Activated CD8-positive, alpha-beta T cell treated with anti-CD3 and anti-CD28 coated beads, Interleukin-2, amount 10 ng/mL, durations not matched to agents 7 days and 5 days (primary cell): ENCODE measurements at regions of chr1 and their contacts with region 1.

Region 1: GRCh38 chr1:168225476-168226190 is at the start of gene SFT2D2:
- DNase-seq: peak; percentile 84
- ATAC-seq: peak; percentile 98
- H3K4me3 Mint-ChIP-seq: peak within 1 kb of the TSS; percentile 86
- H3K27ac Mint-ChIP-seq: peak within 1 kb of the TSS; percentile 82
- H3K4me1 Mint-ChIP-seq: peaks cover 46% of the 10 kb centered on the region
- H3K27me3 Mint-ChIP-seq: peaks cover 3% of the 10 kb centered on the region
- total RNA-seq, gene SFT2D2: 60.2 to 65.6 TPM

Region 2: DNA sequence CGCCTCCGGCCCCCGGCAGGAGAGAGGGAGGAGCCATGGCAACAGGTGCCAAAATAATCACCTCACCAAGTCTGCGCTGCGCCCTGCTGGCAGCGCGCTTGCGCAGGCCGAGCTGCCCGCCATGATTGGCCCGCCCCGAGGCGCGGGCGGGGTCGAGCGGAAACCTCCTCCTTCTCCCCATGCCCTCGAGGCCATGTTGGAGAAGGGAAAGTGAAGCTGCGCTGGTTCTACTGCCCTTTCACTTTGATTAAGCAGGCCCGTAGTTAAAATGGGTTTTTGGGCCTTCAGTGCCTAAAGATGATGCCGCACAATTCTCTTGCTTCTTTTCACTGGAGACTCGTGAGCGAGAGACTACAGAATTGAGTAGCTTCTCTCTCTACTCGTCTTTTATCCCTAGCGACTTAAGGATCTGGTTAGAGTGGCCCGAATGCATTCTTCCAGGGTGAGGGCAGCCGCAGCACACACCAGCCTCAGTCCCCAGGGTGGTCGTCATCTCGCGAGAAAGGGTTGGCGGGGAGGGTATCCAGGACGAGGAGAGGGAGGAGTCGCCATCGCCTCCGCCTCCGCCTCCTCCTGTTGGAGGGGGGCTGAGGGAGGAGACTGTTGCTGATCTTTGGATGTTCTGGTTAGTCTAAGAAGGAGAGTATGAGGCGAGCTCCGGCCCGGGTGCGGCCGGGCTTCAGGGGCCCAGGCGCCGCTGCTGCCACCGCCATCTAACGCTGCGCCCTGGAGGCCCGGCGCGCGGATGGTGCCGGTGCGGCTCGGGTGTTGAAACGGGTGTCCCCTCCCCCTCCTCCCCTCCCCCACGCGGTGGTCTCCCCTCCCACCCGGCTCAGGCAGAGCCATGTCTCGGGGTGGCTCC is 289.3 kb before region 1 on chr1 and contains the start of gene DCAF6:
- CTCF ChIA-PET with region 1: no interaction called
- POLR2A ChIA-PET with region 1: interaction called, 13 read pairs
- DNase-seq: peak; percentile 98
- ATAC-seq: peak; percentile 82
- H3K4me3 Mint-ChIP-seq: peak within 1 kb of the TSS; percentile 84
- H3K27ac Mint-ChIP-seq: peak within 1 kb of the TSS; percentile 95
- H3K4me1 Mint-ChIP-seq: peaks cover 33% of the 10 kb centered on the region
- H3K27me3 Mint-ChIP-seq: no peaks in the 10 kb centered on the region
- total RNA-seq, gene DCAF6: 22.6 to 25.1 TPM

Region 3: DNA sequence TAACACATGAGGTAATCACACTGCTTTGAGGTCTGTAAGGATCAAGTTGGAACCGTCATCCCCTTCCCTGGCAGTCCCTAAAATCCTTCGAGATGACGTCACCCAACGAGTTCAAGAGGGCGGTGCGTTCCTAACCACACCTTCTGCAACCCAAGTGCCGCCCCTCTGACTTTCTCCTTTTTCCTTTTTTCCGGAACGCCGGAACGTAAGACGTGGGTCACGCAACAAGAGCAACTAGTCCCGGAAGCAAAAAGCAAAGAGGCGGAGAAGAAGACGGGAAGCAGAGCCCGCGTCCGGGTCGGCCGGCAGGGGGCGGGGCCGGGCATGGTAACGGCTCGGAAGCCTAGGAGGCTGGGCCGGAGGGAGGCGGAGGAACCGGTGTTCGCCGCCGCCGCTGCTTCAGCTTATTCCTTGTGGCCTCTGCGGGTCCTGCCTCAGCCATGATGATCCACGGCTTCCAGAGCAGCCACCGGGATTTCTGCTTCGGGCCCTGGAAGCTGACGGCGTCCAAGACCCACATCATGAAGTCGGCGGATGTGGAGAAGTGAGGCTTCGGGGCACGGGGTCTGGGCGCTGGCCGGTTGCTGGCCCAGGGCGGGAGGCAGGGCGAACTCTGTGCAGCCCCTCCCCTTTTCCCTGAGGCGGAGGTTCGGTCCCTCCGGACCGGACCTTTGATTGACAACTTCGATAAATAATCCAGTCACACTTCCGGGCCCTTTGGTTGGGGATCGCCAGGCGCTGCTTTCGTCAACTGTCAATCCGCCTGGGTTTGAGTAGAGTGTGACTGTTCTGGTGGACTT is 46.8 kb before region 1 on chr1 and contains the start of gene TIPRL:
- CTCF ChIA-PET with region 1: interaction called, 7 read pairs
- POLR2A ChIA-PET with region 1: interaction called, 19 read pairs
- DNase-seq: peak; percentile 96
- ATAC-seq: peak; percentile 94
- H3K4me3 Mint-ChIP-seq: no peak within 1 kb of the TSS
- H3K27ac Mint-ChIP-seq: no peak within 1 kb of the TSS
- H3K4me1 Mint-ChIP-seq: peaks cover 11% of the 10 kb centered on the region
- H3K27me3 Mint-ChIP-seq: no peaks in the 10 kb centered on the region
- total RNA-seq, gene TIPRL: 48.6 to 53.6 TPM

Region 4: DNA sequence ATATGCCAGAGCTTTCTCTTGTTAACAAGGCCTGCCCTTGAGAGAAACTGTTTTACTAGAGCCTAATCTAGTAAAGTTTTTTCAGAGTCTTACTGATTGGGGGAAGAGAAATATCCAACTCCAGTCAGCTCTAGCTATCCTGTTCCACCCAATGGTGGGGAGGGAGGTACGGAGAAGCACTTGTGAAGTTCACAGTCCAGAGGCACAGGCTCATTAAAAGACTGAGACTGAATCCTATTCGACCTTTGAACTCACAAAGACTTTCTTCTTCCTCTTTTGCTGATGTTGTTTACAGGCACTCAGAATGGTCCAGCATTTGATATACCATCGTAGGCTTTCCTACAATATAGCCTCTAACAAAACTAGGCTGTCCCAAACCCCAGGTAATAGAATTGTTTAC is 15.3 kb before region 1 on chr1:
- CTCF ChIA-PET with region 1: no interaction called
- POLR2A ChIA-PET with region 1: no interaction called
- DNase-seq: no peak
- ATAC-seq: no peak
- H3K4me3 Mint-ChIP-seq: no peak overlapping the region
- H3K27ac Mint-ChIP-seq: no peak overlapping the region
- H3K4me1 Mint-ChIP-seq: no peaks in the 10 kb centered on the region
- H3K27me3 Mint-ChIP-seq: peaks cover 3% of the 10 kb centered on the region

Region 5: DNA sequence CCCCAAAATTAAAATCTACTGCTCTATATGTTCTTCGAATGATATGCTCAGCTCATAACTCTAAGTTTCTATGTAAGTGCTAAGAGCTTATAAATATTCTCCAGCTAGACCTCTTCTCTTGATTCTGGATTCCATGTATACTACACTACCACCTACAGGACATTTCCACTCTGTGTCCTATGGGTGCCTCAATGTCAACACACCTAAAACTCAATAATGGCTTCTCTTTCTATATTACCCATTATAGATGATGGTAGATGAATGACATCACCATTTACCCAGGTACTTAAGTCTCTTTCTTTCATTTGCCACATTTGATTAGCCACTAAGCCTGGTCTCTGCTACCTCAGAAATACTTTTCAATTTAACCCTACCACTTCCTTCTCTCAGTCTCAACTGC is 96.3 kb after region 1 on chr1:
- CTCF ChIA-PET with region 1: interaction called, 10 read pairs
- POLR2A ChIA-PET with region 1: no interaction called
- DNase-seq: no peak
- ATAC-seq: peak; percentile 85
- H3K4me3 Mint-ChIP-seq: no peak overlapping the region
- H3K27ac Mint-ChIP-seq: no peak overlapping the region
- H3K4me1 Mint-ChIP-seq: peaks cover 24% of the 10 kb centered on the region
- H3K27me3 Mint-ChIP-seq: no peaks in the 10 kb centered on the region